Aorta (tissue), 5 donors: ENCODE measurements at regions of chr1 and their contacts with region 1.

Region 1: GRCh38 chr1:117758444-117759316 is 152.8 kb downstream of the TENT5C start:
- DNase-seq: peak; percentile 75 to 83
- ATAC-seq: peak; percentile 92
- H3K4me3 ChIP-seq: peak overlapping the region in 1 of 2 donors; percentile 12
- H3K27ac ChIP-seq: no peak overlapping the region
- H3K4me1 ChIP-seq: peaks cover 0 to under 1% of the 10 kb centered on the region in 2 donors
- H3K27me3 ChIP-seq: no peaks in the 10 kb centered on the region

Region 2: DNA sequence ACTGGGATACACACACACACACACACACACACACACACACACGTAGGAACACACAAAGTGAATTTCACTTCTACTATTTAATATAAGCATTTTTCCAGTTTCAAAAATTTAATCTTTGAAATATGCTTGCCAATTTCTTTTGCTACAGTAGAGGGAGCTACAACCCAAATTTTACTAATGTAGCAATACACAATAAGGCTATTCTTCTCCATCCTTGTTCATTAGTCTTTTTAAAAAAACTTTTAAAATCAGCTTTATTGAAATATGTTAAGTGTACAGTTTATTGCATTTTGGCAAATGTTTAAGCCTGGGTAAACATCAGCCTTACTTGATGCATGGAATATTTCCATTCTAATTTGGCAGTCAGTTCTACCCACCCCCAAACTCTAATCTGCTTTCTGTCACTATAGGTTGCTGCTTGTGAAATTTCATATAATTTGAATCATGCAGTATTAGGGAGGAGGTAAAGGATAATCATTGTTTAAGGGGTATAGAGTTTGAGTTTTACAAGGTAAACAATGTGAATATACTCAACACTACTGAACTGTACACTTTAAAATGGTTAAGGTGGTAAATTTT is 245.8 kb before region 1 on chr1:
- intact Hi-C with region 1: loop called (anchors 2 to 5 kb)
- DNase-seq: no peak
- ATAC-seq: no peak
- H3K4me3 ChIP-seq: no peak overlapping the region
- H3K27ac ChIP-seq: no peak overlapping the region
- H3K4me1 ChIP-seq: no peaks in the 10 kb centered on the region
- H3K27me3 ChIP-seq: no peaks in the 10 kb centered on the region

Region 3: DNA sequence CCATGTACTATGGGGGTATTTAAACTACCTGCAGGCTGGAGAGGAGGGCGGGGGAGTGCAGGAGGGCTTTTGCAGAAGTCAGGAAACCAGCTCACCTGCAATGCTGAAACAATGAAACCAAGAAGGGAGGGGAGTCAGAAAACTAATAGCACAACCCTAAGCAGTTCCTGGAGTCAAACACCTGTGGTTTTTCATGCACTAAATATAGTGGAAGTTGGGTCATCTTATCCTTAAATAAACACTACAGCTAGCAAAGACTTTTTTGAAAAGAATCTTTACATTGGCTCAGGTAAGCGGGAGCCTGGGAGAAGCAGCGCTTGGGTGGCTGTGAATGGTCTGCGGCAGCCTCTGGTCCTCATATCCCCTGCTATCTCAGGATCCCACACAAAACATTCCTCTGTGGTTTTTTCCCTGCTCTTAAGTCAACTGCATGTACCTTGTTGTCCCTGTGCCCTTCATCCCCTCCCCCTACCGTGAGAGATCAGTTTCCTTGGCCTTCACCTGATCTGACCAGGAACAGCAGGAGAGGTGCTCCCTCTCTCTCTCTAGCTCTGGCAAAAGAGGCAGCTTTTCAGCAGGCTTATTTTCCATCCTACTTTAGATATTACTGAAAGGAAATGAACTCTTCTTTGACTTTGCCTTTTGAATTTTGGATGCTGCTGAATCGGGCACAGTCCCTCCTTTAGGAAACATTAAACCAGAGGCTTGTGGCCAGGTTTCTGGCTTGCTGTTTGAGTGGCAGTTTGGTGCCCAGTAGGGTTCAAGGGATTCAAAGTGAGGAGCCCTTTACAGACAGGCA is 126.2 kb before region 1 on chr1:
- intact Hi-C with region 1: no loop called
- DNase-seq: no peak
- ATAC-seq: no peak
- H3K4me3 ChIP-seq: no peak overlapping the region
- H3K27ac ChIP-seq: no peak overlapping the region
- H3K4me1 ChIP-seq: peaks cover 0 to 1% of the 10 kb centered on the region in 2 donors
- H3K27me3 ChIP-seq: no peaks in the 10 kb centered on the region

Region 4: DNA sequence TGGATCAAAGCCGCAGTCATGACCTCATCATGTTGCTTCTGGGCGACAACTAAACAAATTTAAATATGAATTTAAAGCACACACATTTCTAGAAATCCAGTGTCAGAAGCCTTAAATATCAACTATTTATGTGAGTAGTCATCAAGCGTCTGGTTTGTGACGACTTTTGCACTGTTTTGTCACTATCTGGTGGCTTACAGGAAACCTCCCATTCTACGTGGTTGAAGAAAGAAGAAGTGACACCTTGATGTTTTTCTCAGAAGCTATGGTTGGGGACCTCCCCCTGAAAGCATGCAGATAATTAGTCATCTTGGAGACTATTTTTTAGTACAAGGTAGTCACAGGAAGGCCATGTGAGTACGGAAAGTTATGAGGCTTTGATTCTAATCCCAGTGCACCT is 94.4 kb before region 1 on chr1:
- intact Hi-C with region 1: no loop called
- DNase-seq: no peak
- ATAC-seq: no peak
- H3K4me3 ChIP-seq: no peak overlapping the region
- H3K27ac ChIP-seq: no peak overlapping the region
- H3K4me1 ChIP-seq: no peaks in the 10 kb centered on the region
- H3K27me3 ChIP-seq: peaks cover 0 to 1% of the 10 kb centered on the region in 2 donors

Region 5: GRCh38 chr1:117674521-117675397 is 83.9 kb before region 1 on chr1:
- intact Hi-C with region 1: loop called in 1 of 2 experiments (anchors 5 kb)
- DNase-seq: peak in 1 of 2 donors; percentile 57
- ATAC-seq: no peak
- H3K4me3 ChIP-seq: no peak overlapping the region
- H3K27ac ChIP-seq: peak overlapping the region in 1 of 2 donors; percentile 7
- H3K4me1 ChIP-seq: peaks cover 5 to 10% of the 10 kb centered on the region in 2 donors
- H3K27me3 ChIP-seq: no peaks in the 10 kb centered on the region

Region 6: GRCh38 chr1:117735045-117735992 is 23.4 kb before region 1 on chr1:
- intact Hi-C with region 1: no loop called
- DNase-seq: no peak
- ATAC-seq: no peak
- H3K4me3 ChIP-seq: peak overlapping the region in 1 of 2 donors; percentile 79
- H3K27ac ChIP-seq: no peak overlapping the region
- H3K4me1 ChIP-seq: no peaks in the 10 kb centered on the region
- H3K27me3 ChIP-seq: peaks cover 0 to 2% of the 10 kb centered on the region in 2 donors

Region 7: DNA sequence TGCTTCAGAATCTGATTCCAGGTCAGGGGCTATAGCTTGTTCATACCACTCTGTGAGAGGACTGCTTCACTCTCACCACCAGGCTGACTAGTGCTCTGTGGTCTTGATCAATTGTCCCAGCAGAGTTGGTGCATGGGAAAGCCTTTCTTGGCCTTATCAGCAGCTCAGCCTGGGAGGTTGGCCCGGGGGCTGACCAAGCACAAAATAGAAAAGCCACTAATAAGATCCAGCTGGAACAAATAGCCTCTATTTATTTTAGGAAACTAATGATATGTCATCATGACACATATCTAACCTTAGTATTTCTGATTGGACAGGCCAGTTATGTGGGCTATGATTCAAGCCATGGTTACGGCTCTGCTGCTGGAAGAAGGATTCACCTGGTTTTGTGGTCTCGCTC is 36.5 kb after region 1 on chr1:
- intact Hi-C with region 1: no loop called
- DNase-seq: no peak
- ATAC-seq: peak; percentile 80
- H3K4me3 ChIP-seq: no peak overlapping the region
- H3K27ac ChIP-seq: no peak overlapping the region
- H3K4me1 ChIP-seq: peaks cover 0 to 4% of the 10 kb centered on the region in 2 donors
- H3K27me3 ChIP-seq: no peaks in the 10 kb centered on the region

Region 8: DNA sequence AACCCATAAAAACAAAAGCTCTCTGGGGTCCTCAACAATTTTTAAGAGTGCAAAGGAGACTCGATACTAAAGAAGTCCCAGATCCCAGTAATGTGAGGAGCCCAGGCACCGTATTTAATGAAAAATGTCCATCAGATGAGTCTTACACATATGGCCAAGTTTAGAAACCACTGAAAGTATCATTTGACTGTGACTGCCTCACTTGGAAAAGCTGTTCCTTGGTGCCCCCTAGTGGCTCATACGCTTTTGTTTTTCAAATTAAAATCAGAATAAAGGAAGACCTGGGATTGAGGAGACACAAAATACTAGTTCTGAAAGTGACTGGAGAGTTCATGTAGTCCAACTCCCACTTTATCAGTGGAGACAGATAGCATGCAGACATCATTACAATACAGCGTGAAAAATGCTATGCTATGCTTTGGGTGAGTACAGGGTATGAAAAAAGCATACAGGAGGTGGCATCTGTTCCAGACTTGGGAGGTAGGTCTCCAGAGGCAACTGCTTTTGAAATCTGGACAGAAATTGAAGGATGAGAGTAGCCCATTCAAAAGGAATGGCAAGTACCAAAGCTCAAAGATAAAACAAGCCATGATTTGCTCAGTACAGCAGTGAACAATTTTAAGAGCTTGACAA is 136.9 kb after region 1 on chr1:
- intact Hi-C with region 1: loop called (anchors 1 to 5 kb)
- DNase-seq: peak in 1 of 2 donors; percentile 59
- ATAC-seq: peak; percentile 84
- H3K4me3 ChIP-seq: no peak overlapping the region
- H3K27ac ChIP-seq: no peak overlapping the region
- H3K4me1 ChIP-seq: no peaks in the 10 kb centered on the region
- H3K27me3 ChIP-seq: no peaks in the 10 kb centered on the region